Mammary epithelial cell (primary cell): ENCODE measurements at regions of chr4 and their contacts with region 1.

Region 1: DNA sequence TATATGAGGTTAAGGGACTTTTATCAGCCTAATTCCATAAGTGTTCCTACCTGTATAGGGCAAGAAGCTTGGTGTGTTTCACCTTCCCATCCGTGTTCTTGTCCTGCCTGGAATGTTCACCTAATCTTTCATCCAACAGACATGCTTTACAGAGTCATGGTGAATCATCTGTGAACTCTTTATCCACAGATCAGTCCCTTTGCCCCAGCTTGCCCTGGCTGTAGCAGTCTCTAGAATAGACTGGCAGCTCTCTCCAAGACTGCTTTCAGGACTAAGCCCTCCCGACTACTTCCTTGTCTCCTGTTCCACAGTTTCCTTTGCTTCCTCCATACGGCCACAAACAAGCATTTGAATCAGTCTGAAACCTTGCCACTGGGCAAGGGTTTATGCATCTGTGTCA is 177.9 kb upstream of the IL15 start:
- DNase-seq: peak; percentile 88
- H3K4me3 ChIP-seq: no peak overlapping the region
- H3K27ac ChIP-seq: peak overlapping the region; percentile 64
- H3K4me1 ChIP-seq: peaks cover 41% of the 10 kb centered on the region
- H3K27me3 ChIP-seq: no peaks in the 10 kb centered on the region
- CTCF ChIP-seq: no peak

Region 2: DNA sequence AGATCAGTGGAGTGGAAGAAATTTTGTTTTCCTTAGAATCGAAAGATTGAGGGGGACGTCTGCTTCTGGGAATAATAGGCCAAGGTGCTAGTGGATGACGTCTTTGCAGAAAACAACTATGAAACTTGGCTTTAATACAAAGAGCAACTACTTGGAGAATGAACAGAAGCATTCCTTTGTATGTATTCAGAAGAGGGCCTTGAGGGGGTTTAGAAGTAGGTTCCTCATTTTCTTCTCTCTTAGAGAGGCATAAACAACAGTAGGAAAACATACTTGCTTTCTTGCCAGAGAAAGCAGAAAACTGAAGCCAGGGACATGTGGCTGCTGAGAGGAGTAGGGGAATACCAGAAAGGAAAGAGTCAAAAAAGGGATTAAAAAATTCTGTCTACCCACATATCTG is 70.0 kb before region 1 on chr4:
- CTCF ChIA-PET with region 1: no interaction called
- dilution Hi-C with region 1: loop called (anchors 5 kb)
- in situ Hi-C with region 1: no loop called
- intact Hi-C with region 1: no loop called
- DNase-seq: peak; percentile 70
- H3K4me3 ChIP-seq: no peak overlapping the region
- H3K27ac ChIP-seq: no peak overlapping the region
- H3K4me1 ChIP-seq: peaks cover 25% of the 10 kb centered on the region
- H3K27me3 ChIP-seq: no peaks in the 10 kb centered on the region
- CTCF ChIP-seq: no peak

Region 3: GRCh38 chr4:141435446-141436225 is 22.9 kb before region 1 on chr4:
- CTCF ChIA-PET with region 1: no interaction called
- dilution Hi-C with region 1: no loop called
- in situ Hi-C with region 1: no loop called
- intact Hi-C with region 1: loop called (anchors 2 kb)
- DNase-seq: no peak
- H3K4me3 ChIP-seq: no peak overlapping the region
- H3K27ac ChIP-seq: no peak overlapping the region
- H3K4me1 ChIP-seq: peaks cover 9% of the 10 kb centered on the region
- H3K27me3 ChIP-seq: no peaks in the 10 kb centered on the region
- CTCF ChIP-seq: no peak